ENCODE measurements at regions of chr2 and their contacts with region 1.

Region 1: GRCh38 chr2:43226558-43226954 is at the start of gene ZFP36L2:
- DNase-seq: peak; percentile 96
- ATAC-seq: peak; percentile 65
- H3K4me3 ChIP-seq: peak within 1 kb of the TSS; percentile 76 to 98 (median 92)
- H3K4me3 Mint-ChIP-seq: peak within 1 kb of the TSS; percentile 98
- H3K27ac ChIP-seq: peak within 1 kb of the TSS; percentile 90 to 93
- H3K27ac Mint-ChIP-seq: peak within 1 kb of the TSS; percentile 97
- H3K4me1 ChIP-seq: peaks cover 36 to 56% of the 10 kb centered on the region in 2 donors
- H3K4me1 Mint-ChIP-seq: peaks cover 50% of the 10 kb centered on the region
- H3K27me3 ChIP-seq: no peaks in the 10 kb centered on the region
- H3K27me3 Mint-ChIP-seq: no peaks in the 10 kb centered on the region
- CTCF ChIP-seq: no peak
- total RNA-seq, gene ZFP36L2: 455 and 482 TPM in 2 replicates

Region 2: GRCh38 chr2:42931146-42931817 is 295.3 kb before region 1 on chr2:
- CTCF ChIA-PET with region 1: no interaction called
- POLR2A ChIA-PET with region 1: interaction called, 11 read pairs
- intact Hi-C with region 1: no loop called
- DNase-seq: no peak
- ATAC-seq: no peak
- H3K4me3 ChIP-seq: no peak overlapping the region
- H3K4me3 Mint-ChIP-seq: no peak overlapping the region
- H3K27ac ChIP-seq: no peak overlapping the region
- H3K27ac Mint-ChIP-seq: no peak overlapping the region
- H3K4me1 ChIP-seq: no peaks in the 10 kb centered on the region
- H3K4me1 Mint-ChIP-seq: no peaks in the 10 kb centered on the region
- H3K27me3 ChIP-seq: no peaks in the 10 kb centered on the region
- H3K27me3 Mint-ChIP-seq: peaks cover 5% of the 10 kb centered on the region
- CTCF ChIP-seq: no peak

Region 3: DNA sequence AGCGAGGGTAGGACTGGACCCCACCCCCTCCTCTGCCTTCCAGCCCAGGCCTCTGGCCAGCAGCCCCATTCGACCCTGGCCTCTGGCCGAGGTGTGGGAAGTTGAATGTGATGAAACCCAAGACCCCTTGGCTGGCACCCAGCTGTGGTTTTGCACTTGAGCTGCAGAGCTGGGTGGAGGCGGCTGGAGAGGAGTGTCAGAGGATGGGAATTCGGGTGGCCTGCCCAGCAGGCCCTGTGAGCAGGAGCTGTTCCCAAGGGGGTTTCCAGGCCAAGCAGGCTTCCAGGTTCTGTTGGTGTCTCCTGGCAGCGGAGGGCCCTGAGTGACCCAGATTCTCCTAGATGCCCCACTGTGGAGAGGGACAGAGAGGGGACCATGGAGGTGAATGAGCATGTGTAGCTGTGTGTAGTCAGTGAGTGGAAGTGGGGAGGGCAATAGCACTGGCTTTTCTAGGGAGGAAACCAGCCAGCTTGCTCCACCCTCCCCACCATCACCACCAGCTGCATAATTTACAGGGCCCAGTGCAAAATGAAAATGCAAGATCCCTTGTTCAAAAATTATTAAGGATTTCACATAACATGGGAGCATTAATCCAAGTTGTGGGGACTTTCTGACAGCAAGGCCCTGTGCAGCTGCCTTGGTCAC is 262.0 kb before region 1 on chr2:
- CTCF ChIA-PET with region 1: interaction called, 18 read pairs
- POLR2A ChIA-PET with region 1: interaction called, 3 read pairs
- intact Hi-C with region 1: no loop called
- DNase-seq: no peak
- ATAC-seq: no peak
- H3K4me3 ChIP-seq: no peak overlapping the region
- H3K4me3 Mint-ChIP-seq: no peak overlapping the region
- H3K27ac ChIP-seq: no peak overlapping the region
- H3K27ac Mint-ChIP-seq: no peak overlapping the region
- H3K4me1 ChIP-seq: peaks cover 41 to 46% of the 10 kb centered on the region in 2 donors
- H3K4me1 Mint-ChIP-seq: peaks cover 30% of the 10 kb centered on the region
- H3K27me3 ChIP-seq: peaks cover 0 to 7% (median 0%) of the 10 kb centered on the region in 4 experiments
- H3K27me3 Mint-ChIP-seq: peaks cover 8% of the 10 kb centered on the region
- CTCF ChIP-seq: no peak

Region 4: DNA sequence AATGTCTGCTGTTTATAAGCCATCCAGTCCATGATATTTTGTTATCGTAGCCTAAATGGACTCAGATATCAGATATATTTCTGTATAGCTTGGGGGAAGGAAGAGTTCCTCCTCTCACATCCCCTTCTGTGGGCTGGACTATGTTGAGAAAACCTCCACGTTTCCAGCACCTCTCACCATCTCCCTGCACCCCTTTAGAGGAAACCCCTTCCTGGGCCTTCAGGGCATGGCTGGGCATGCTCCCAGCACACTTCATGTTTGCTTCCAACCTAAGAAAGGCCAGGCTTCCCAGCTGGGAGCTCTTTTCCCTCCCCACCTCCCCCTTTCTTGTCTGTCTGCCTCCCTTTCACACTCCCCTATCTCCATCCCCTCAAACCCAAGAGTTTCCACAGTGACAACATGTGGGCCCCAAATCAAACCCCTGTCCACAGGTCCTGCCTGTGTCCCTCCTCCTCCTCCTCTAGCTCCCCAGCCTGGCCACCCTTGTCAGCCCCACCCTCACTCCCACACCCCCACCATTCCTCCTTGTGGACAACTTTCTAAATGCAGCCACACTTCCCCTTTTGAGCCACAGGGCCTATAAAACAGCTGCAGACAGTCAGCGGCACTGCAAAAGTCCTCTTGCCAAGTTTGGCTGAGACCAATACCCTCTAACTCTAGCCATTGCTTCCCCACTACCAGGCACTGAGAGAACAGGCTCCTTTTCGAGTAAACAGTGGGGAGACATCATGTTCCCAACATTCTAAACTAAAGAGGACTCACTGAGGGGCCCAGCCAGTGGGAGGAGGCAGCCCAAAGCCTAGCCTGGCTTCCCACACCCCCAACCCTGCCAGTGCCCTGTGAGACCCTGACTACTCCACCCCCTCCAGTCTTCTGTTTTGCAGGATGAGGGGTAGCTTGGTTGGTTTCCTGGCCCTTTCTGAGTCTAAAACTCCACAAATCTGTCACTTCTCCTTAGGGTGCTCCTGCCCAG is 120.7 kb before region 1 on chr2:
- CTCF ChIA-PET with region 1: interaction called, 27 read pairs
- POLR2A ChIA-PET with region 1: interaction called, 11 read pairs
- intact Hi-C with region 1: loop called (anchors 1 kb)
- DNase-seq: peak; percentile 78
- ATAC-seq: peak; percentile 65
- H3K4me3 ChIP-seq: no peak overlapping the region
- H3K4me3 Mint-ChIP-seq: peak overlapping the region; percentile 78
- H3K27ac ChIP-seq: peak overlapping the region; percentile 80 to 88
- H3K27ac Mint-ChIP-seq: peak overlapping the region; percentile 96
- H3K4me1 ChIP-seq: peaks cover 58 to 74% of the 10 kb centered on the region in 2 donors
- H3K4me1 Mint-ChIP-seq: peaks cover 61% of the 10 kb centered on the region
- H3K27me3 ChIP-seq: no peaks in the 10 kb centered on the region
- H3K27me3 Mint-ChIP-seq: no peaks in the 10 kb centered on the region
- CTCF ChIP-seq: peak; percentile 61

Region 5: GRCh38 chr2:43178602-43179542 is 47.7 kb before region 1 on chr2:
- CTCF ChIA-PET with region 1: interaction called, 449 read pairs
- POLR2A ChIA-PET with region 1: interaction called, 223 read pairs
- intact Hi-C with region 1: loop called (anchors 1 kb)
- DNase-seq: no peak
- ATAC-seq: no peak
- H3K4me3 ChIP-seq: no peak overlapping the region
- H3K4me3 Mint-ChIP-seq: no peak overlapping the region
- H3K27ac ChIP-seq: peak overlapping the region in 1 of 2 donors; percentile 50
- H3K27ac Mint-ChIP-seq: peak overlapping the region; percentile 76
- H3K4me1 ChIP-seq: peaks cover 39 to 51% of the 10 kb centered on the region in 2 donors
- H3K4me1 Mint-ChIP-seq: peaks cover 52% of the 10 kb centered on the region
- H3K27me3 ChIP-seq: no peaks in the 10 kb centered on the region
- H3K27me3 Mint-ChIP-seq: no peaks in the 10 kb centered on the region
- CTCF ChIP-seq: no peak

Region 6: GRCh38 chr2:43318791-43319190 is 92.2 kb after region 1 on chr2:
- CTCF ChIA-PET with region 1: no interaction called
- POLR2A ChIA-PET with region 1: no interaction called
- intact Hi-C with region 1: no loop called
- DNase-seq: no peak
- ATAC-seq: no peak
- H3K4me3 ChIP-seq: no peak overlapping the region
- H3K4me3 Mint-ChIP-seq: no peak overlapping the region
- H3K27ac ChIP-seq: no peak overlapping the region
- H3K27ac Mint-ChIP-seq: no peak overlapping the region
- H3K4me1 ChIP-seq: no peaks in the 10 kb centered on the region
- H3K4me1 Mint-ChIP-seq: peaks cover 2% of the 10 kb centered on the region
- H3K27me3 ChIP-seq: no peaks in the 10 kb centered on the region
- H3K27me3 Mint-ChIP-seq: no peaks in the 10 kb centered on the region
- CTCF ChIP-seq: no peak

Region 7: GRCh38 chr2:43484323-43484930 is 257.9 kb after region 1 on chr2:
- CTCF ChIA-PET with region 1: interaction called, 71 read pairs
- POLR2A ChIA-PET with region 1: interaction called, 3 read pairs
- intact Hi-C with region 1: loop called (anchors 2 kb)
- DNase-seq: peak; percentile 80
- ATAC-seq: peak; percentile 54
- H3K4me3 ChIP-seq: no peak overlapping the region
- H3K4me3 Mint-ChIP-seq: no peak overlapping the region
- H3K27ac ChIP-seq: no peak overlapping the region
- H3K27ac Mint-ChIP-seq: no peak overlapping the region
- H3K4me1 ChIP-seq: peaks cover 21 to 24% of the 10 kb centered on the region in 2 donors
- H3K4me1 Mint-ChIP-seq: peaks cover 27% of the 10 kb centered on the region
- H3K27me3 ChIP-seq: no peaks in the 10 kb centered on the region
- H3K27me3 Mint-ChIP-seq: no peaks in the 10 kb centered on the region
- CTCF ChIP-seq: peak; percentile 93

Measured in B cell (primary cell).